ENCODE measurements at regions of chr1 and their contacts with region 1.

Region 1: GRCh38 chr1:204446370-204447111 is 34.9 kb upstream of the PPP1R15B start:
- DNase-seq: peak; percentile 85
- H3K4me3 Mint-ChIP-seq: no peak overlapping the region
- H3K27ac Mint-ChIP-seq: peak overlapping the region; percentile 33
- H3K4me1 Mint-ChIP-seq: peaks cover 52% of the 10 kb centered on the region
- H3K27me3 Mint-ChIP-seq: no peaks in the 10 kb centered on the region

Region 2: DNA sequence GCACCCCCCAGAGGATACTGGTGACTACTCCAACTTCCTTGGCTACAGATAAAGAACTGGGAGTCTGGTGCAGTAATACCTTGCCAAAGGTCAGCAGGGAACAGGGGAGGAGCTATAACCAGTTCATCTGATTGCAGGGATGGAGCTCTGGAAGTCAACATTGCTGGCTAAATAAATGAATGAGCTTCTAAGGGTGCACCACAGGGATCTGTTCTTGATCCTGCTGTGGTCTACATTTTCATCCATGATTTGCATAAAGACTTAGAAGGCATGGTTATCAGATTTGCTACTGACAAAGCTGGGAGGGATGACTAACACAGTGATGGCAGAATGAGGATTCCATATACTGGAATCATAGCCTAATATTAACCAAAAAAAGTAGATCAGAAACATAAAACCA is 105.2 kb before region 1 on chr1:
- CTCF ChIA-PET with region 1: no interaction called
- DNase-seq: no peak
- H3K4me3 Mint-ChIP-seq: no peak overlapping the region
- H3K27ac Mint-ChIP-seq: no peak overlapping the region
- H3K4me1 Mint-ChIP-seq: no peaks in the 10 kb centered on the region
- H3K27me3 Mint-ChIP-seq: peaks cover 32% of the 10 kb centered on the region

Region 3: DNA sequence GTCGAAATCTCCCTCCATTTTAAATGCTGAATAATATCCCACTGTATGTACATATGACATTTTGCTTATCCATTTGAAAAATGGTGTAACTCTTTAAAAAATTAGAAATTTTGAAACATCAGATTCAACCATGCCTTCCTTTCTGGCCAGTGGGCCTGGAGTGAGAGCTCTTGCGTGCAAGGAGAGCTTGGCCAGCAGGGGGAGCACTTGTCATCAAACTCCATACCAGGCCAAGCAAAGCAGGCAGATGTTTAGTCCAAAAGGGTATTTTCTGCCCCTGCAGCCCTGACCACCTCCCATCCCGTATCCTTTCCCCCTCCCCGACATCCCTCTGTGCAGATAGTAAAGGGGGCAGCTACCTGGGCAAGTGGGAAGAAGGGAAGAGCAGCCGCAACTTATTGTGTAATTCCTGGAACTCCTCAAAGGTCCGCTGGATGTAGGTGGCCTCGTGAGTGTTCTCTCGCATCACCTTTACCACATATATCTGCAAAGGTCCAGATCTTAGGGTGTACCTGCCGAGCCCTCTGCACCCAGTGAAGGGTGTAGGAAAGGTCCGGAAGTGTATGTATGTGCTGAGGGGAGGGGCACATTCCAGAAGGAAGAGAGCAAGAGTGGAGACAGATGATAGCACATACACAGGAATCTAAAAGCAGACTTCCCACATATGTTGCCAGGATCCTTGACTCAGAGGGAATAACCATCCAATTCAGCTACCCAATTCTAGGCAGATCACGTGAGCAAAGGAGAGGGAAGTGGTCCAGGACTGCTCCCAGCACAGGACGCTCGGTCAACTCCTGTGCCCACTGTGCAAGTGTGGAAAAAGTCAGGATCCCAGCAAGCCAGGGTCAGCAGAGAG is 15.0 kb before region 1 on chr1:
- CTCF ChIA-PET with region 1: interaction called, 70 read pairs
- DNase-seq: peak; percentile 87
- H3K4me3 Mint-ChIP-seq: no peak overlapping the region
- H3K27ac Mint-ChIP-seq: no peak overlapping the region
- H3K4me1 Mint-ChIP-seq: no peaks in the 10 kb centered on the region
- H3K27me3 Mint-ChIP-seq: no peaks in the 10 kb centered on the region

Region 4: DNA sequence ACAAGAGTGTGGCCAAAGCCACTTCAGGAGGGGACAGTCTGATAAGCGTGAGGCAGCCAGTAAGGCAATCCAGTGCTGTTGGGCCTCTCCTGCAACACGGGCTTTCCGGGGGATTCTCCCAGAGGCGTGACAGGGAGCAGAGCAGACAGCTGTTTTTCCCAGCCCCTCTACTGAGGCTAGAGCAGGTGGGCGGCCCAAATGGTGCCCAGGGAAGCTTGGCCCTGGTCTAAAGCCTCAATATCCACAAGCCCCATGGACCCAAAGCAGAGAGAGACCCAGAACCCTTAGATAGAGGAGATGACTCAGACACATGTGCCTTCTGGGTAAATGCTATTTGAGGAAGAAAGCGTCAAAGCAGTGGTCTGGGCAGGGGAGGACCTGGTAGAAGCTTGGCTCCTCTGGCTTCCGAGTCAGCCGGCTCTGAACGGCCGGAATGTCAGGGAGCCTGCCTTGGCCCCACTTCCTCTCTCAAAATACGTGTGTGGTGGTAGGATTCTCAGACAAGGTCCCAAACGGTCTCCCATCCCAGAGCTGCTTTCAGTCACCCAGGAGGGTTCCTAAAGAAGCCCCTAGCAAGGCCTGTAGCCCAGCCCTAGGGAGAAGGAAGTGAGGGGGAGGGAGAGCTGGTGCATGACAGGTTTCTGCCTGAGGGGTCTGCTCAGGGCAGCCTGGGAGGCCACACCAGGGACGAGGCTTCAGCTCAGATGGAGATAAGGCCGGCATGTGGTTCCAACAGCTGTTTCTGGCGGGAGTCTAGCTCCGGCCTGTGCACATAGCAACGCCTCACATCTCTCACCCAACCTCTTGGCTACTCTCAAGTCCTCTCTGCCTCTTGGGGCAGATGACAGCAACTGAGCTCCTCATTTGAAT is 19.2 kb after region 1 on chr1:
- CTCF ChIA-PET with region 1: interaction called, 12 read pairs
- DNase-seq: no peak
- H3K4me3 Mint-ChIP-seq: no peak overlapping the region
- H3K27ac Mint-ChIP-seq: no peak overlapping the region
- H3K4me1 Mint-ChIP-seq: peaks cover 46% of the 10 kb centered on the region
- H3K27me3 Mint-ChIP-seq: no peaks in the 10 kb centered on the region

Region 5: DNA sequence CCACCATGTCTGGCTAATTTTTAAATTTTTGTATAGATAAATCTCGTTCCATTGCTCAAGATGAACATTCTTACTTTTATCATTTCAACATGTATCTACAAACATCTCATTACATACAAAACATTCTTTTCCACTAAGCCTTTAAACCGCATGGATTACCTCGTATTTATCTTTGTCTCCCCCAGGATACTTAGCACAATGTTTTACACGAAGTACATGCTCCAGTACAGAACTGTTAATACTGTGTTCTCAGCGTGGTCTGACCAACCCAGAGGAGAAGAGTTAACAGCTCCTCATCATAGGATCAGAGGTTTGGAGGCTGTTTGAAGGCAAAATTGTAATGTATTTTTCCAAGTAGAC is 40.7 kb after region 1 on chr1:
- CTCF ChIA-PET with region 1: interaction called, 508 read pairs
- DNase-seq: no peak
- H3K4me3 Mint-ChIP-seq: no peak overlapping the region
- H3K27ac Mint-ChIP-seq: no peak overlapping the region
- H3K4me1 Mint-ChIP-seq: peaks cover 27% of the 10 kb centered on the region
- H3K27me3 Mint-ChIP-seq: no peaks in the 10 kb centered on the region

Region 6: DNA sequence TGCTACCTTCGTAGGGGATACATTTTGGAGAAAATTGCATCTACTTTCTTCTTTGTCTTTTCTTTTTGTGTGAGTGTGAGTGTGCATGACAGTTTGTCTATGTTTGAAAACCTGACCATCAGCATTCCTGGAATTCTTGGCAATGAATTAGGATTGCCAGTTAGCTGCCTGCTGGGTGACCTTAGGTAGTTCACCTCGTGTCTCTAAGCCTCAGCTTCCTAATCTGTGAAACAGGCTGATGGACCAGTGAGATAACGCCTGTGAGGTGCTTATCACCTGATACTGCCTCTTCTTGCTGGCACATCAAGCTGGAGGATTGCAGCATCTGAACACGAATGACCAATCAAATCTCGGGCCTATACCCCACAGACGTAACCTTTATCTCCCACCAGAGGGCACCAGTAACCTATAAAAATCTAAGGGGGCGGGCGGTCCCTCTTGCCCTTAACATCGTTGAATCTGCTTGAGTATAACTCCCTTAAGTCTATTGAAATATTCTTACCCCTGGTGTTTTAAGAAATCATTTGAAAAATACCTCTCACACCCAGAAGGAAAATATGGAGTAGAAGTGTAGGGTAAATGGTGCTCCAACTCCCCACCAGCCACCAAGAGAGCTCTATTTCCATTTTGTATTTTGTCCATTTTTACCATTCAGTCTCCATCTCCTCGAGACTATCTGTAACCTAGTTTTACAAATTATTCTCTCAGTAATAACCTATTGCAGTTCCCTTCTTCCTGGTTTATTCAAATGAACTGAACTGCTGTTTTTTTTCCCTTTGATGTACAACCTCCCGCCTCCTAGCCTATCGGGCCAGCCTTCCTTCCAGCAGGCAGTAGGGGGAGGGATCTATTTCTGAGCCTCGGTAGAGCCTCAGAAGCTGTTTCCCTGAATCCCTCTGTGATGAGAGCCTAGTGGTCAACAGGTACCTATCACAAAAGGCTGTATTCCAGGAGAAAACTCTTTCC is 119.4 kb after region 1 on chr1:
- CTCF ChIA-PET with region 1: interaction called, 11 read pairs
- DNase-seq: peak; percentile 73
- H3K4me3 Mint-ChIP-seq: no peak overlapping the region
- H3K27ac Mint-ChIP-seq: peak overlapping the region; percentile 89
- H3K4me1 Mint-ChIP-seq: peaks cover 75% of the 10 kb centered on the region
- H3K27me3 Mint-ChIP-seq: no peaks in the 10 kb centered on the region

Measured in activated naive CD4-positive, alpha-beta T cell treated with anti-CD3 and anti-CD28 coated beads, Interleukin-2, amount 10 ng/mL, durations not matched to agents 7 days and 5 days (primary cell).